Endothelial cell of umbilical vein (primary cell): ENCODE measurements at regions of chr13 and their contacts with region 1.

Region 1: DNA sequence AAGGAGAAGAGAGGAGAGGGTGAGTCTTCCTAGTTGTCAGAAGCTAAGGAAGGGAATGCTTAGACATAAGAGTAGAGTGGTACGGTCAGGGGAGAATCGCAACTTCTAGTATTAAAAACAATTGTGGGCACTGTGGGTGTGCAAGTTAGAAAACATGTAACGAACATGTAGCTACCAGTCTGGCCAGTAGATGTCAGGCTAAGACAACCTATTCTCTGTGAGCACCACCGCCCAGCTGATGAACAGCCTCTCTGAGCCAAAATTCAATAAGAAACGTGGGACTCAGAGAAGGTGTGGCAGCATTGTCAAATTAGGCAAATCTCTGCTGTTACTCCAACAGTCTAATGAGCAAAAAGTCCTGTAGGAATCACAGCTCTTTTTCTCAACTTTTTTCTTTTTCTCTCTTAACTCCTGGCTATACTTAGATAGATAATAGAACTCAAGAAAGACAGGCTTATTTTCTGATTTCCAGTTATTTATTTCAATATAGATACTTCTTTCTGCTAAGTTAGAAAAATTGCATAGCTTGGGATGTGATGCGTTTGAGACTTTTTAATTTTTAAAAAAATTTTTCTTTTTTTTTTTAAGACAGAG is 186.2 kb downstream of the USP12 start:
- DNase-seq: peak; percentile 77
- H3K4me3 ChIP-seq: no peak overlapping the region
- H3K27ac ChIP-seq: no peak overlapping the region
- H3K4me1 ChIP-seq: peaks cover 4% of the 10 kb centered on the region
- H3K27me3 ChIP-seq: peaks cover 2 to 4% of the 10 kb centered on the region in 2 experiments
- CTCF ChIP-seq: peak; percentile 63 to 74
- POLR2A ChIP-seq: no peak

Region 2: GRCh38 chr13:27171827-27172494 is 186.6 kb after region 1 on chr13:
- CTCF ChIA-PET with region 1: interaction called, 6 read pairs
- POLR2A ChIA-PET with region 1: no interaction called
- dilution Hi-C with region 1: no loop called
- intact Hi-C with region 1: loop called (anchors 1 kb)
- DNase-seq: peak; percentile 92
- H3K4me3 ChIP-seq: peak overlapping the region; percentile 74 to 86 (median 80)
- H3K27ac ChIP-seq: peak overlapping the region; percentile 88
- H3K4me1 ChIP-seq: peaks cover 38% of the 10 kb centered on the region
- H3K27me3 ChIP-seq: no peaks in the 10 kb centered on the region
- CTCF ChIP-seq: no peak
- POLR2A ChIP-seq: no peak

Region 3: DNA sequence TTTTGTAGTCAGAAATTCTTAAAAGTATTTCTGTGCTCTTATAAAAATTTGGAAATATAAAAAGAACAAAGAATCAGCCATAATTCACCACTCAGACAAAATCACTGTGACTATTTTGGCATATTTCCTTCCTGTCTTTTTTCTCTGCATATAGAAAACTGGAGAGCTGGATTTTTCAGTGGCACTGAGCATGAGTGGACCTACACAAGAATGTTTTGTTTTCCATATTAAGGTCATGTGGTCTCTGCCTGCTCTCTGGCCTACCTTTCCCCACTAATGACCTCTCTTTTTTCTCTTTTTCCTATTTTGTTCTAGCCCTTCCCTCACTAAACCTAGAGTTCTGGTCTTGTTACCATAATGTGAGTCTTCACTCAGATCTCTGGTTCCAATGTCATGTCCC is 203.8 kb after region 1 on chr13:
- CTCF ChIA-PET with region 1: no interaction called
- POLR2A ChIA-PET with region 1: no interaction called
- dilution Hi-C with region 1: no loop called
- intact Hi-C with region 1: no loop called
- DNase-seq: peak; percentile 11
- H3K4me3 ChIP-seq: no peak overlapping the region
- H3K27ac ChIP-seq: no peak overlapping the region
- H3K4me1 ChIP-seq: peaks cover 13% of the 10 kb centered on the region
- H3K27me3 ChIP-seq: no peaks in the 10 kb centered on the region
- CTCF ChIP-seq: no peak
- POLR2A ChIP-seq: no peak

Region 4: GRCh38 chr13:27270594-27271520 is 285.5 kb after region 1 on chr13 and contains the start of gene RASL11A:
- CTCF ChIA-PET with region 1: interaction called, 12 read pairs
- POLR2A ChIA-PET with region 1: no interaction called
- dilution Hi-C with region 1: no loop called
- intact Hi-C with region 1: no loop called
- DNase-seq: peak; percentile 87
- H3K4me3 ChIP-seq: peak within 1 kb of the TSS; percentile 36 to 71 (median 67)
- H3K27ac ChIP-seq: peak within 1 kb of the TSS; percentile 12
- H3K4me1 ChIP-seq: peaks cover 16% of the 10 kb centered on the region
- H3K27me3 ChIP-seq: peaks cover 17 to 18% of the 10 kb centered on the region in 2 experiments
- CTCF ChIP-seq: peak; percentile 84 to 91
- POLR2A ChIP-seq: peak; percentile 75
- total RNA-seq, gene RASL11A: 1.3 and 2.1 TPM in 2 replicates

Region 5: GRCh38 chr13:27339299-27339698 is 353.9 kb after region 1 on chr13:
- CTCF ChIA-PET with region 1: interaction called, 11 read pairs
- POLR2A ChIA-PET with region 1: interaction called, 5 read pairs
- dilution Hi-C with region 1: no loop called
- intact Hi-C with region 1: no loop called
- DNase-seq: peak; percentile 58
- H3K4me3 ChIP-seq: no peak overlapping the region
- H3K27ac ChIP-seq: no peak overlapping the region
- H3K4me1 ChIP-seq: no peaks in the 10 kb centered on the region
- H3K27me3 ChIP-seq: peaks cover 3 to 6% of the 10 kb centered on the region in 2 experiments
- CTCF ChIP-seq: peak; percentile 45 to 77
- POLR2A ChIP-seq: no peak

Region 6: DNA sequence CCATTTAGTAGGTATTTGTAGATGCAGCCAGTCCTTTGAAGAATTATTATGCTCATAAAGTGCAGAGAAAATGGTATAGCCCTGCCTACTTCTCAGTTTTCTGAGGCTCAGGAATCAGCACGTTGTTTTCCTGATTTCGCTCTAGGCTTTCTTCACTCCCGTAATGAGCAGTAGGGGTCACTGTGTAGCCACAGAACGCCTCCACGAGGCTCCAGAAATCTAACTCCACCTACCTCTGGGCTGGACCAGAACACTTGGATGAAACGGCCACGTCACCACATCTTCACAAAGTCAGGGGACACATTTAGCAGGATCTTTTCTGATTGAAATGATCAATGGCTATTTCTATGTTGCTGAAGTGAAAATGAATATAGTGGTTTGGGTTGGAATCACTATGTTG is 389.3 kb after region 1 on chr13:
- CTCF ChIA-PET with region 1: interaction called, 12 read pairs
- POLR2A ChIA-PET with region 1: no interaction called
- dilution Hi-C with region 1: no loop called
- intact Hi-C with region 1: no loop called
- DNase-seq: peak; percentile 73
- H3K4me3 ChIP-seq: no peak overlapping the region
- H3K27ac ChIP-seq: no peak overlapping the region
- H3K4me1 ChIP-seq: no peaks in the 10 kb centered on the region
- H3K27me3 ChIP-seq: peaks cover 6 to 10% of the 10 kb centered on the region in 2 experiments
- CTCF ChIP-seq: peak; percentile 67 to 75
- POLR2A ChIP-seq: no peak